Dorsolateral prefrontal cortex (tissue), 120 donors: ENCODE measurements at regions of chr6 and their contacts with region 1.

Region 1: DNA sequence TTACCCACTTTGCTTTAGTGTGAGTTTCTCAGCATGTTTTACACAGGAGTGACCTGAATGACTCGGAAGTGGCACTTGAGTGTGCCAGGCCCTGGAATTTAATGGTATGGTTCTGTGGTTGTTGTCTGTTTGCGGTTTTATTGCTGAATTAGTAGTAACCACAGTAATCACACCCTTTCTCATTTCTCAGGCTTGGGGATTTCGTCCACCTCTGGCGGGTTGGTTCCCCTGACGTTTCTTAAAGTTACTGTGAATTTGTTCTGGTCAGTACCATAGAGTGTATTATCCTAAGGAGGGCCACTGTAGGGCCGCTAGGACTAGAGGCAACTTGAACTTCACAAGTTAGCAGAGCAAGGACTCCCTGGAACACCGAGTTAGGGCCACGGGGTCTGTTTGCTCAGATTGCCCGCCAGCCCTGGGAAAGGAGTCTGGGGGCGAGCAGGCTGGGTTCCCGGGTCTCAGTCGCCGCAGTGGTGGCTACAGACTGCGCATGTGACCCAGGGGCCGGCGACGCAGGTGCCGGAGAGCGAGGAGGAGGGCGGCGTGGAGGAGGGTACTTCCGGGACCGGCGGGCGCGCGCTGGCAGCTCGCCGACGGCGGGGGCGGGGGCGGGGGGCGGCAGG is 546 bp upstream of the KLHL32 start:
- DNase-seq: no peak
- H3K4me3 ChIP-seq: peak overlapping the region; percentile 43 to 97 (median 87)
- H3K27ac ChIP-seq: peak overlapping the region; percentile 67 to 98 (median 96)
- H3K27me3 ChIP-seq: no peaks in the 10 kb centered on the region
- CTCF ChIP-seq: peak in 3 of 56 donors; percentile 0 to 17 (median 2)

Region 2: DNA sequence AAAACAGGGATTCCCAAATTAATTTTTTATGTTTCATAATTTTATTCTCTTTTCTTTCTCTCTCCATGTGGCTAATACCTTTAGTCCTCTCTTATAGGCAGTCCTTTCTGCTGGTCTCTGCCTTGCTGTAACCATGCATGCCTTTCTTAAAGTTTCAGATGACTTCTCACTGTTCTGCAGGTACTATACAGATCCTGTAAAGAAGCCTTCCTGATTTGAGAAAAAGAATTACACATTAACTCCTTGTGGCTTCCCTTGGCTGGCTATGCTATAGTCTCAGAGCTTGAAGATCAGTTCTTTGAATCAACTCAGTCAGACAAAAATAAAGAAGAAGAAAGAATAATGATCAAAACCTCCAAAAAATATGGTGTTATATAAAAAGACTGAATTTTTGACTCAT is 79.5 kb before region 1 on chr6:
- intact Hi-C with region 1: no loop called
- DNase-seq: no peak
- H3K4me3 ChIP-seq: no peak overlapping the region
- H3K27ac ChIP-seq: no peak overlapping the region
- H3K27me3 ChIP-seq: no peaks in the 10 kb centered on the region
- CTCF ChIP-seq: no peak

Region 3: GRCh38 chr6:96990462-96990861 is 66.5 kb after region 1 on chr6:
- intact Hi-C with region 1: loop called (anchors 5 to 10 kb)
- DNase-seq: peak in 7 of 10 donors; percentile 59 to 74 (median 72)
- H3K4me3 ChIP-seq: peak overlapping the region in 3 of 59 donors; percentile 4 to 8 (median 7)
- H3K27ac ChIP-seq: peak overlapping the region in 57 of 59 donors; percentile 18 to 88 (median 76)
- H3K27me3 ChIP-seq: no peaks in the 10 kb centered on the region
- CTCF ChIP-seq: no peak

Region 4: DNA sequence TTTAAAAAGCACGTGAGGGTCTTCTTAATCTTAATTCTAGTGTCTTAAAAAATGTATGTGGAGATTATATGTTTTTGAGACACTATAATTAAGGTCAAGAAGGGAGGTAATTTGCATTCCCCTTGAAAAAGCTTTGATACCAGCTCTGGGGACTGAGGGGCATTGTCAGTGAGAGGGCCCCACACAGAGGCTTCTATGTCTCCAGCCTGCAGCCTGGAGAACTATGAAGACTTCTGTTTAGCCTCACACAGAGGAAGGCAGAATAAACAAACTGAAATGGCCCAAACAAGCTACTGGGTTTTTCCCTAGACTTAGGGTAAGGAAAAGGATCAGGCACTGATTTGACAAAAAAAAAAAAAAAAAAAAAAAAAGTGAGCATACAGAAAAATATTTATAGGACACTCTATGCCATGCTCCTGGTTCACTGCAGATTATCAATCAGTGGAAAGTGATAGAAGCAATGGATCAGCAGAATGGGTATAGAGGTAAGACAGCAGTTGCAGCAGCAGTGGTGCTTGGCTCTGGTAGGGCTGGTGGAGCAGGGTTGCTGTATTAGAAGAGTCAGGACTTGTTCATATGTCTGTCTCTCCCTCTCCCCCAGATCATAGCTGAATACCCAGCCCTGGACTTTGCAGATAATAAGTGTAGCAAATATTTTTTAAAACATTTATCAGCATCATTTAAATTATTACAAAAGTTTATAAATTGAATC is 86.0 kb after region 1 on chr6:
- intact Hi-C with region 1: loop called in 1 of 2 experiments (anchors 5 kb)
- DNase-seq: peak in 8 of 10 donors; percentile 51 to 72 (median 64)
- H3K4me3 ChIP-seq: peak overlapping the region in 35 of 59 donors; percentile 0 to 52 (median 20)
- H3K27ac ChIP-seq: peak overlapping the region; percentile 65 to 98 (median 92)
- H3K27me3 ChIP-seq: no peaks in the 10 kb centered on the region
- CTCF ChIP-seq: peak in 10 of 56 donors; percentile 10 to 44 (median 14)

Region 5: GRCh38 chr6:97203343-97203742 is 279.4 kb after region 1 on chr6:
- intact Hi-C with region 1: no loop called
- DNase-seq: no peak
- H3K4me3 ChIP-seq: no peak overlapping the region
- H3K27ac ChIP-seq: no peak overlapping the region
- H3K27me3 ChIP-seq: no peaks in the 10 kb centered on the region
- CTCF ChIP-seq: no peak